Activated CD4-positive, alpha-beta memory T cell treated with anti-CD3 and anti-CD28 coated beads, Interleukin-2, amount 10 ng/mL, durations not matched to agents 7 days and 5 days (primary cell): ENCODE measurements at regions of chr5 and their contacts with region 1.

Region 1: DNA sequence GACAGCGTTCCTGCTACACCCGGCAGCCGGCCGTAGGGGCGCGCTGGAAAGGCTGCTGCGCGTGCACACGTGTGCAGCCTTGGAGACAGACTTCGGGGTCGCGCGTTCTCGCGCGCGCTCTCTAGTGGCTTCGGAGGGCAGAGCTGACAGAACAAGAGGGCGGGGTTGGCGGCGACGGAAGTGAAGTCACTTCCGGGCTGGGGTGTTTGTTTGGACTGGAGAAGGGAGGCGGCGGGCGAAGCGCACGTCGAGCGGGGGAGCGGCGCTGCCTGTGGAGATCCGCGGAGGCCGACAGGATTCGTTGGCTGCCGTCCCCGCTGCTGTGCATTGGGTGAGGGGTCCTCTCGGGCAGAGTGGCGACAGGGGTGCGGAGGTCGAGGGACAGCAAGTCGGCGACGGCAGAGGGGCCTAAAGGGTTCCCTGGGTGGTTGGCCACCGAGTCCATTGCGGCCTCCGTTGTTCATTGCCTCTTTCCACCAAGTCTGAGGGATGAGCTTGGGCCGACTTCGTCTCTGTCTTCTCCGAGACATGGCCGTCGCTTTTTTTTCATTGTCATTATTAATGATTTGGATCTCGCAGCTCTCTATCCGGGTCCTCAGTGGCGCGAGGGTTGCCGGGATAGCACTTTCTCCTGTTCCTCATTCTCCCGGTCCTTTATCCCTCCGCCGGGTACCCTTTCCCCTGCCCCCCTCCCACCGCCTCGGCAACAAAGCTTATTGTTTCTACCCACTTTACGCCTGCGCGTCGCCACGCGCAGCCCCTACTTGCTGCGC is at the start of gene PAIP2:
- DNase-seq: peak; percentile 97
- H3K4me3 Mint-ChIP-seq: peak within 1 kb of the TSS; percentile 98
- H3K27ac Mint-ChIP-seq: peak within 1 kb of the TSS; percentile 99
- H3K4me1 Mint-ChIP-seq: peaks cover 48% of the 10 kb centered on the region
- H3K27me3 Mint-ChIP-seq: no peaks in the 10 kb centered on the region
- total RNA-seq, gene PAIP2: 127 to 130 TPM

Region 2: GRCh38 chr5:138967791-138968448 is 373.9 kb before region 1 on chr5:
- CTCF ChIA-PET with region 1: no interaction called
- POLR2A ChIA-PET with region 1: no interaction called
- DNase-seq: no peak
- H3K4me3 Mint-ChIP-seq: no peak overlapping the region
- H3K27ac Mint-ChIP-seq: no peak overlapping the region
- H3K4me1 Mint-ChIP-seq: no peaks in the 10 kb centered on the region
- H3K27me3 Mint-ChIP-seq: no peaks in the 10 kb centered on the region

Region 3: GRCh38 chr5:139190125-139190524 is 151.7 kb before region 1 on chr5:
- CTCF ChIA-PET with region 1: no interaction called
- POLR2A ChIA-PET with region 1: no interaction called
- DNase-seq: no peak
- H3K4me3 Mint-ChIP-seq: no peak overlapping the region
- H3K27ac Mint-ChIP-seq: no peak overlapping the region
- H3K4me1 Mint-ChIP-seq: peaks cover 19% of the 10 kb centered on the region
- H3K27me3 Mint-ChIP-seq: no peaks in the 10 kb centered on the region

Region 4: DNA sequence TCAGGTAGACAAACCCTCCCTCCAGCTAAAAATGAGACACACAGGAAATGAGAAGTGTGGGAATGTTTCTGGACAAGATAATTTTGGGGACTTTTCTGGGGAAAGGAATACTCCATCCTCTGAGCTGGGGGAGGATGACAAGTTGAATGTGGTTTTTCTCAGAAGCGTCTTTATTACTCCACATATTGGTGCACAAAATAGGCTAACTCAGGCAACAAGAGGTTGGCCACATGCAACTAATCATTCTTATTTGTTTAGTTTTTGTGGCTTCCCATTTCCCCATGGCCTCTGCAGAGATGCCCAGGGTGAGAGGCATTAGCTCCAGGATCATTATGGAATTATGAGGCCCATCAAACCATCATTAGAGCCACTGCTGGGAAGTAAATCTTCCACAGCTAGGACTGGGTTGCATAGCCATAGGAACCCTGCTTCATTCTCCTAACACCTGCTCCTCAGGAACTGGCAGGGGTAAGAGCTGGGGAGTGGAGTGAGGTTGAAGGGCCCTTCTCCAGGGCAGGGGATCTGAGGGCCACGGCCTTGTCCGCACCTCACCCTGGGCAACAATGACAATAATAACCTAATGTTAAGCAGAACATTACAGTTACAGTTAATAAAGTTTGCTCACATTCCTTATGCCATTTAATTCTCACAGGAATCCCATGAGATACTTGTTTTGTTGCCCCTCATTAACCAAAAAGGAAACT is 134.4 kb before region 1 on chr5:
- CTCF ChIA-PET with region 1: no interaction called
- POLR2A ChIA-PET with region 1: no interaction called
- DNase-seq: no peak
- H3K4me3 Mint-ChIP-seq: no peak overlapping the region
- H3K27ac Mint-ChIP-seq: no peak overlapping the region
- H3K4me1 Mint-ChIP-seq: no peaks in the 10 kb centered on the region
- H3K27me3 Mint-ChIP-seq: no peaks in the 10 kb centered on the region

Region 5: GRCh38 chr5:139251281-139251687 is 90.6 kb before region 1 on chr5:
- CTCF ChIA-PET with region 1: interaction called, 11 read pairs
- POLR2A ChIA-PET with region 1: interaction called, 5 read pairs
- DNase-seq: peak; percentile 60
- H3K4me3 Mint-ChIP-seq: no peak overlapping the region
- H3K27ac Mint-ChIP-seq: peak overlapping the region; percentile 11
- H3K4me1 Mint-ChIP-seq: peaks cover 21% of the 10 kb centered on the region
- H3K27me3 Mint-ChIP-seq: no peaks in the 10 kb centered on the region

Region 6: DNA sequence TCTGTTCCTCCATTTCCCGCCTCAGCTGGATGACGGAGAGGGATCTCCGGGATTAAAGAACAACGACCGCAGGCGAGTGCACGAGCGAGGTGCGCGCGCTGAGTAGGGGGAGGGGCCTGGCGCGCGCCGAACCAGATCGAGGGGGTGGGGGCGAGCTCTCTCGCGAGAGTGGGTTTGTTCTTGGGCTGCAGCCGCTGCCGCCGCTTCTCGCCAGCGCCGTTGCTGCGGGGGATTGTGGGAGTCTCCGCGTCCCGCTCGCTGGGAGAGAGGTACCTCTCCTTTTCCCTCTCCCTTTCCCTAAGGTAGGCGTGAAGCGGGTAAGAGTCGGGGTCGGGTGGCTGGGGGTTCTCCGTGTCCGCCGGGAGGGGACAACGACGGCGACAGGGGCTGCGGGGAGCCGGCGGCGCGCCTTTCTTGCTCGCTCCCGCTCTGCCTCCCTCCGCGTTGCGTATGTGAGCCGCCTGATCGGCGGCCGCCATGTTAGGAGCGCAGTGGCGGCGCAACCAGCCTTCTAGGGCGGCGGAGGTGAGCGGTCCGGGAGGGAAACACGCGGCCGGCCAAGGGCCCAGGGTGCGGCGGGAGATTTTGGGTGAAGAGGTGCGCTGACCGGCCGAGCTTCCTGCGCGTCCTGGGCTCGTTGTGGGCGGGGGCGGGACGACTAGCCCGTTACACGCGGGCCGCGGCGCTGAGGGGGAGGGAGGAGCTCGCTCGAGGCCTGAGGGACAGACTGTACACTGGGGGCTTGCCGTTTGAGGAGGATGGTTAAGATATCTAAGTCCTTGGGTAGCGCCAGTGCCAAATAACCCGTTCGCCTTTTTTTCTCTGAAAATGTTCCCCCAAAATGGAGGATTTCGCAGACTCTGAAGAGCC is 48.1 kb before region 1 on chr5 and contains the start of gene MATR3:
- CTCF ChIA-PET with region 1: interaction called, 7 read pairs
- POLR2A ChIA-PET with region 1: interaction called, 47 read pairs
- DNase-seq: peak; percentile 95
- H3K4me3 Mint-ChIP-seq: peak within 1 kb of the TSS; percentile 95
- H3K27ac Mint-ChIP-seq: peak within 1 kb of the TSS; percentile 98
- H3K4me1 Mint-ChIP-seq: peaks cover 44% of the 10 kb centered on the region
- H3K27me3 Mint-ChIP-seq: no peaks in the 10 kb centered on the region
- total RNA-seq, gene MATR3: 168 to 193 TPM

Region 7: GRCh38 chr5:139354186-139354585 is 12.3 kb after region 1 on chr5:
- CTCF ChIA-PET with region 1: interaction called, 4 read pairs
- POLR2A ChIA-PET with region 1: interaction called, 13 read pairs
- DNase-seq: no peak
- H3K4me3 Mint-ChIP-seq: no peak overlapping the region
- H3K27ac Mint-ChIP-seq: no peak overlapping the region
- H3K4me1 Mint-ChIP-seq: peaks cover 7% of the 10 kb centered on the region
- H3K27me3 Mint-ChIP-seq: no peaks in the 10 kb centered on the region

Region 8: DNA sequence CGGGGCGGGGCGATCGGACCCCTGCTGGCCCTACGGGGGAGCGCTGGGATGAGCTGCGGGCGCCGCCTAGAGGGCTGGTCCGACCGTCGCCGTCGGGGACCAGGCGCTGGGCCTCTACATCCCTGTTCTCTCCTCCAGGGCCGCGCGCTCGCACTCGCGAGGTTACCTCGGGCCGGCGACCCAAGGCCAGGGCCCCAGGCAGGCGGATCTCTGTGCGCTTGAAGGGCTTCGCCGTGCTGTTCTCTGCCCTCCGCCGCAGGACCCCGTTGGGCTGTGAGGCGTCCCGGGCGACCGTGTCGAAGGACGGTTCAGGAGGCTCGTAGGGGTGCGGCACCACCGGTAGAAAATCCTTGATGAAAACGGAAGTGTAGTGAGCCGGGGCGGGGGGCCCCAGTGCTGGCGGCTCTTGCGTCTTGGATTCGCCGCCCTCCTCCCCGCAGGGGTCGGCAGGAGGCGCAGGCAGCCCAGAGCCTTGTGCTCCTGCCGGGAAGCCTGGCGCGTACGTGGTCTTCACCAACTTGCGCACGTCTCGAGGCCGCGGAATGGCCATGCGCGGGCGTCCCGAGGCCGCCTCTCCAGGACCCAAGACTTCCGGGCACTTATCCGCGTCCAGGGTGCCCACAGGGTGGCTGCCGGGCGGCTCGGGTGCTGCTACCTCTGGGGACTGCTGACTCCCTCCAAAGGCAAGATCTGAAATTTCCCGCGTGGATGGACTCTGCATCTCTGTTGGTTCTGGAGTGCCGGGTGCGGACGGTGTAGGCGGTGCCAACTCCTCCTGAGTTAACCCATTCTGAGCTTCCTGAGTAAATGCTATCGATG is 51.1 kb after region 1 on chr5:
- CTCF ChIA-PET with region 1: interaction called, 23 read pairs
- POLR2A ChIA-PET with region 1: interaction called, 122 read pairs
- DNase-seq: peak; percentile 92
- H3K4me3 Mint-ChIP-seq: peak overlapping the region; percentile 99
- H3K27ac Mint-ChIP-seq: peak overlapping the region; percentile 90
- H3K4me1 Mint-ChIP-seq: peaks cover 65% of the 10 kb centered on the region
- H3K27me3 Mint-ChIP-seq: no peaks in the 10 kb centered on the region

Region 9: GRCh38 chr5:139417214-139417613 is 75.4 kb after region 1 on chr5:
- CTCF ChIA-PET with region 1: interaction called, 3 read pairs
- POLR2A ChIA-PET with region 1: interaction called, 14 read pairs
- DNase-seq: no peak
- H3K4me3 Mint-ChIP-seq: no peak overlapping the region
- H3K27ac Mint-ChIP-seq: peak overlapping the region; percentile 93
- H3K4me1 Mint-ChIP-seq: peaks cover 83% of the 10 kb centered on the region
- H3K27me3 Mint-ChIP-seq: no peaks in the 10 kb centered on the region